Calu3 (cell line): ENCODE measurements at regions of chr3 and their contacts with region 1.

Region 1: GRCh38 chr3:122458992-122459391 is 43.1 kb upstream of the WDR5B start:
- DNase-seq: no peak
- H3K4me3 Mint-ChIP-seq: no peak overlapping the region
- H3K27ac Mint-ChIP-seq: no peak overlapping the region
- H3K4me1 Mint-ChIP-seq: no peaks in the 10 kb centered on the region
- H3K27me3 Mint-ChIP-seq: no peaks in the 10 kb centered on the region
- CTCF ChIP-seq: no peak

Region 2: GRCh38 chr3:122514123-122515019 is 55.4 kb after region 1 on chr3 and contains the start of gene KPNA1:
- CTCF ChIA-PET with region 1: no interaction called
- intact Hi-C with region 1: loop called (anchors 5 kb)
- DNase-seq: peak; percentile 92
- H3K4me3 Mint-ChIP-seq: peak within 1 kb of the TSS; percentile 97
- H3K27ac Mint-ChIP-seq: peak within 1 kb of the TSS; percentile 89
- H3K4me1 Mint-ChIP-seq: peaks cover 49% of the 10 kb centered on the region
- H3K27me3 Mint-ChIP-seq: no peaks in the 10 kb centered on the region
- CTCF ChIP-seq: no peak
- total RNA-seq, gene KPNA1: 76.7 and 78.5 TPM in 2 replicates

Region 3: GRCh38 chr3:122679085-122679881 is 220.3 kb after region 1 on chr3:
- CTCF ChIA-PET with region 1: no interaction called
- intact Hi-C with region 1: loop called (anchors 5 kb)
- DNase-seq: peak; percentile 82
- H3K4me3 Mint-ChIP-seq: peak overlapping the region; percentile 95
- H3K27ac Mint-ChIP-seq: peak overlapping the region; percentile 93
- H3K4me1 Mint-ChIP-seq: peaks cover 26% of the 10 kb centered on the region
- H3K27me3 Mint-ChIP-seq: no peaks in the 10 kb centered on the region
- CTCF ChIP-seq: peak; percentile 78